ENCODE measurements at regions of chr4 and their contacts with region 1.

Region 1: GRCh38 chr4:67522851-67523671 is 22.2 kb downstream of the CENPC start:
- DNase-seq: peak; percentile 43
- H3K4me3 Mint-ChIP-seq: peak overlapping the region; percentile 26
- H3K27ac Mint-ChIP-seq: peak overlapping the region; percentile 94
- H3K4me1 Mint-ChIP-seq: peaks cover 67% of the 10 kb centered on the region
- H3K27me3 Mint-ChIP-seq: no peaks in the 10 kb centered on the region

Region 2: DNA sequence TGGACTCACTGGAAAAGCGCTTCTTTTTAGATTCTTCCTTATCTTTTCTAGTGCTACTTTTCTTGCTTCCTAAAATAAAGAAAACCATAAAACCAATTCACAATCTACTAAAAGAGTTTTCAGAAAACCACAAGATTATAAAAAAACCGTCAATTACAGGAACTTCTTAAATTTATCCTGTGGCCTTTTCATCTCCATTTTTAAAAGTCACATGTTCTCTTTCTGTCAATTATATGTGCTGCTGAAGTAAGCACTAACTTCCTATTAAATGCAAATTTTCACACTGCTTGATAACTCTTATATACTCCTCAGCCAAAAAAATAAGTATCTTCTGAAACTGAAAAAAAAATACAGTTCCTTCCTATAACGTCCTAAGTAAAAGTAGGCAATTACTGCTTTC is 10.6 kb before region 1 on chr4:
- CTCF ChIA-PET with region 1: no interaction called
- POLR2A ChIA-PET with region 1: no interaction called
- intact Hi-C with region 1: no loop called
- DNase-seq: no peak
- H3K4me3 Mint-ChIP-seq: no peak overlapping the region
- H3K27ac Mint-ChIP-seq: no peak overlapping the region
- H3K4me1 Mint-ChIP-seq: peaks cover 18% of the 10 kb centered on the region
- H3K27me3 Mint-ChIP-seq: no peaks in the 10 kb centered on the region

Region 3: GRCh38 chr4:67535280-67535840 is 12.3 kb after region 1 on chr4:
- CTCF ChIA-PET with region 1: no interaction called
- POLR2A ChIA-PET with region 1: no interaction called
- intact Hi-C with region 1: loop called (anchors 2 kb)
- DNase-seq: no peak
- H3K4me3 Mint-ChIP-seq: no peak overlapping the region
- H3K27ac Mint-ChIP-seq: no peak overlapping the region
- H3K4me1 Mint-ChIP-seq: peaks cover 35% of the 10 kb centered on the region
- H3K27me3 Mint-ChIP-seq: no peaks in the 10 kb centered on the region

Region 4: DNA sequence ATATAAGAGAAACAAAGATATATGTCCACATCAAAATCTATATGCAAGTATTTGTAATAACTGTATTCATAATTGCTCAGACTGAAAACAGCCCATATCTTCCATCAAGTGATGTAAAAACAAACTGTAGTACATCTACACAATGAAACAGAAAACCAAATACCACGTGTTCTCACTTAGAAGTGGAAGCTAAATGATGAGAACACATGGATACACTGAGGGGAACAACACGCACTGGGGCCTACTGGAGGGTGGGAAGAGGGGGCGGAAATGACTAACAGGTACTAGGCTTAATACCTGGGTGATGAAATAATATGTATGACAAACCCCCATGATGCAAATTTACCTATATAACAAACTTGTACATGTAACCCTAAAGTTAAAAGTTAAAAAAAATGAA is 135.2 kb after region 1 on chr4:
- CTCF ChIA-PET with region 1: no interaction called
- POLR2A ChIA-PET with region 1: no interaction called
- intact Hi-C with region 1: loop called (anchors 2 kb)
- DNase-seq: peak; percentile 63
- H3K4me3 Mint-ChIP-seq: no peak overlapping the region
- H3K27ac Mint-ChIP-seq: peak overlapping the region; percentile 63
- H3K4me1 Mint-ChIP-seq: peaks cover 24% of the 10 kb centered on the region
- H3K27me3 Mint-ChIP-seq: no peaks in the 10 kb centered on the region

Region 5: GRCh38 chr4:68349649-68350360 is 826.7 kb after region 1 on chr4 and contains the start of gene YTHDC1:
- CTCF ChIA-PET with region 1: no interaction called
- POLR2A ChIA-PET with region 1: no interaction called
- intact Hi-C with region 1: loop called (anchors 10 kb)
- DNase-seq: peak; percentile 97
- H3K4me3 Mint-ChIP-seq: peak within 1 kb of the TSS; percentile 97
- H3K27ac Mint-ChIP-seq: peak within 1 kb of the TSS; percentile 98
- H3K4me1 Mint-ChIP-seq: peaks cover 33% of the 10 kb centered on the region
- H3K27me3 Mint-ChIP-seq: no peaks in the 10 kb centered on the region
- total RNA-seq, gene YTHDC1: 66.8 to 68.5 TPM

Measured in activated CD4-positive, alpha-beta memory T cell treated with anti-CD3 and anti-CD28 coated beads for 36 hours (primary cell).